ENCODE measurements at regions of chr13 and their contacts with region 1.

Region 1: DNA sequence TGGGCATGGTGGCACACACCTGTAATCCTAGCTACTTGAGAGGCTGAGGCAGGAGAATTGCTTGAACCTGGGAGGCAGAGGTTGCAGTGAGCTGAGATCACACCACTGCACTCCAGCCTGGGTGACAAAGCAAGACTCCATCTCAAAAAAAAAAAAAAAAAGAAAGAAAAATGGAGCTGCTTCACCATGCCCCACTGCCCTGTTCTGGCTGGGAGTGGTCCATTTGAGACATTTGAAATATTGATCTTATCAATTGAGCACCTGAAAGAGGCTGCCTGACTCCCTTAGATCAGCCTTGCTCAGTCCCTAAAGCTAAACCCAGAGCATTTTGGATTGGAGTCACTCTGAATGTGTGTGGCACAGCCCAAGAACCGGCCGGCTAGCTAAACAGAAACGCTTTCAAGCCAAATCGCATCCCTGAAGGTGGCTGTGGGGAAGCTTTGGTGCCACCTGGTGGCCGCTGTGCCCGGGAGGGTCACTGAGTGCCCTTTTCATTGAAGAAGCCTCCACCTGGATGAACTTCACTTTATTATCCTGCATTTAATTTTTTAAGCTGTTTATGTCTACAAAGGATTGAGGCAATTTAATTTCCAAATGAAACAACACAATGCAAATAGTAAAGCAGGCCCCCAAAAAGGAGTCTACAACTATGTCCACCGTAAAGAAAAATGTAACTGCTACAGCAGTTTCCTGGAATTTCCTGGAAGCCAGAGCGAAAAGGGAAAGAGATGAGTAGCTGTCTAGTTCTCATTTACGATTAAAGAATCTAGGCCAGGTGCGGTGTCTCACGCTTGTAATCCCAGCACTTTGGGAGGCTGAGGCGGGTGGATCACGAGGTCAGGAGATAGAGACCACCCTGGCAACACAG is 53.1 kb upstream of the SERPINE3 start:
- DNase-seq: peak; percentile 80 to 87 (median 83)
- ATAC-seq: peak; percentile 87
- H3K4me3 ChIP-seq: no peak overlapping the region
- H3K27ac ChIP-seq: no peak overlapping the region
- H3K4me1 ChIP-seq: peaks cover 14% of the 10 kb centered on the region
- H3K27me3 ChIP-seq: no peaks in the 10 kb centered on the region
- CTCF ChIP-seq: peak; percentile 83 to 92 (median 87)
- POLR2A ChIP-seq: no peak

Region 2: GRCh38 chr13:51148952-51149573 is 137.3 kb before region 1 on chr13:
- intact Hi-C with region 1: loop called (anchors 10 kb)
- DNase-seq: peak; percentile 41 to 53 (median 48)
- ATAC-seq: peak; percentile 65
- H3K4me3 ChIP-seq: no peak overlapping the region
- H3K27ac ChIP-seq: peak overlapping the region in 1 of 4 donors; percentile 16
- H3K4me1 ChIP-seq: no peaks in the 10 kb centered on the region
- H3K27me3 ChIP-seq: no peaks in the 10 kb centered on the region
- CTCF ChIP-seq: peak; percentile 24 to 72 (median 61)
- POLR2A ChIP-seq: no peak

Region 3: GRCh38 chr13:51222037-51222685 is 64.2 kb before region 1 on chr13 and contains the start of gene FAM124A:
- intact Hi-C with region 1: loop called (anchors 5 kb)
- DNase-seq: peak; percentile 38 to 64 (median 50)
- ATAC-seq: peak; percentile 89
- H3K4me3 ChIP-seq: peak within 1 kb of the TSS; percentile 7 to 51
- H3K27ac ChIP-seq: no peak within 1 kb of the TSS
- H3K4me1 ChIP-seq: peaks cover 15% of the 10 kb centered on the region
- H3K27me3 ChIP-seq: no peaks in the 10 kb centered on the region
- CTCF ChIP-seq: peak in 4 of 7 experiments; percentile 33 to 79 (median 57)
- POLR2A ChIP-seq: no peak
- total RNA-seq, gene FAM124A: 0.78 to 2.0 TPM